ENCODE measurements at regions of chr9 and their contacts with region 1.

Region 1: DNA sequence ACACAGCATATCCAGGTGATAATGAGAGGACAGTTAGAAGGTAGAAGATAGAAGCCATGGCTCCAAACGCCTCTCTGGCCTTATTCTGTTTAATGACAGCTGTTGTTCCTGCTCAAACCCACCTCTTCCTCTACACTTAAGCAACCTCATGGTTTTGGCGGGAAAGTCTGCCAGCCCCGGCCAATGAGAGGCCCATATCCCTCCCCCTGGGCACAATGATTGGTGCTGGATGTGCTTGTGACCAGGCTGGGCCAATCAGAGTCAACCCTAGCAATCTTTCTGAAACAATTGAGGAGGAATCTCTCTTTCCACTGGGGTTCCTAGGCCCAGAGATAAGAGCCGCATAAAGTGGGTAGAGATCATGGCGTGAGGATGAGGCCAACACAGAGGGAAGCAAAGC is 4.8 kb upstream of the GFI1B start:
- DNase-seq: no peak
- H3K4me3 Mint-ChIP-seq: no peak overlapping the region
- H3K27ac Mint-ChIP-seq: no peak overlapping the region
- H3K4me1 Mint-ChIP-seq: peaks cover 4% of the 10 kb centered on the region
- H3K27me3 Mint-ChIP-seq: peaks cover 7% of the 10 kb centered on the region

Region 2: GRCh38 chr9:132412089-132412488 is 561.6 kb before region 1 on chr9:
- CTCF ChIA-PET with region 1: no interaction called
- intact Hi-C with region 1: loop called (anchors 1 kb)
- DNase-seq: peak; percentile 47
- H3K4me3 Mint-ChIP-seq: no peak overlapping the region
- H3K27ac Mint-ChIP-seq: no peak overlapping the region
- H3K4me1 Mint-ChIP-seq: peaks cover 23% of the 10 kb centered on the region
- H3K27me3 Mint-ChIP-seq: peaks cover 45% of the 10 kb centered on the region

Region 3: GRCh38 chr9:132507746-132508469 is 465.8 kb before region 1 on chr9:
- CTCF ChIA-PET with region 1: interaction called, 3 read pairs
- intact Hi-C with region 1: loop called (anchors 5 kb)
- DNase-seq: peak; percentile 81
- H3K4me3 Mint-ChIP-seq: no peak overlapping the region
- H3K27ac Mint-ChIP-seq: no peak overlapping the region
- H3K4me1 Mint-ChIP-seq: peaks cover 2% of the 10 kb centered on the region
- H3K27me3 Mint-ChIP-seq: peaks cover 7% of the 10 kb centered on the region

Region 4: GRCh38 chr9:132849185-132849706 is 124.5 kb before region 1 on chr9:
- CTCF ChIA-PET with region 1: interaction called, 3 read pairs
- intact Hi-C with region 1: loop called (anchors 5 kb)
- DNase-seq: peak; percentile 31
- H3K4me3 Mint-ChIP-seq: peak overlapping the region; percentile 45
- H3K27ac Mint-ChIP-seq: peak overlapping the region; percentile 81
- H3K4me1 Mint-ChIP-seq: peaks cover 19% of the 10 kb centered on the region
- H3K27me3 Mint-ChIP-seq: no peaks in the 10 kb centered on the region

Region 5: DNA sequence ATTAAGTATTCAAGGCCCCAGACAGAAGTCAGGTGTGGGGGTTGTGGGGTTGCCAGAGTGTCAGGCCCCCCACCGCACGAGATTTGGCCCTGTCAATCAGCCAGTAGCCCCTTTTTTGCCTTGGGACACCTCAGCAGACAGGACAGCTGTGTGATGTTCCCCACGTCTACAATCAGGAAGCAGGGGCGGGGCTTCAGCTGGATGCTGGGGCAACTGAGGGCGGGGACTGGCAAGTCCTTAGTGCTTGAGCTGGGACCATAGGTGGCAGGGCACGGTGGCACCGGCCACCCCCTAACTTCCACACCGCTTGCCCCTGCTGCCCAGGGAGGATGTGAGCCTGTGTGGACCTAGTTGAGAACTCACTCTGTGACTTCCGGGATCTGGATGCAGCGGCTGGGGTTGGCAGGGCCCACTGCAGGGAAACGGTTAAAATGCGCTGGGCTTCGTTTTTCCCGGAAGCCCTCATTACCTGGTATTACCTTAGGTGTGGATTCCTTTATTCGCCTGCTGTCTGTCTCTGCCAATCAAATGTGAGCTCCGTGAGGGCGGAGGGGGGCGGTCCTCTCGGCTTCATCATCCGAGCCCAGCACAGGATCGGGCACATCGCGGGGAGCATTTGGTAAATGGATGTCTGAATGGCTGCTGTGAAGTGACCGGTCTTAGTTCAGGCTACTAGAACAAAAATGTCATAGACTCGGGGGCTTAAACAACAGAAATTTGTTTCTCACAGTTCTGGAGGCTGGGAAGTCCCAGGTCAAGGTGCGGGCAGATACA is 49.6 kb after region 1 on chr9:
- CTCF ChIA-PET with region 1: interaction called, 6 read pairs
- intact Hi-C with region 1: loop called (anchors 2 kb)
- DNase-seq: peak; percentile 70
- H3K4me3 Mint-ChIP-seq: no peak overlapping the region
- H3K27ac Mint-ChIP-seq: no peak overlapping the region
- H3K4me1 Mint-ChIP-seq: peaks cover 15% of the 10 kb centered on the region
- H3K27me3 Mint-ChIP-seq: no peaks in the 10 kb centered on the region

Measured in activated naive CD4-positive, alpha-beta T cell treated with anti-CD3 and anti-CD28 coated beads for 36 hours (primary cell).